ENCODE measurements at regions of chr6 and their contacts with region 1.

Region 1: DNA sequence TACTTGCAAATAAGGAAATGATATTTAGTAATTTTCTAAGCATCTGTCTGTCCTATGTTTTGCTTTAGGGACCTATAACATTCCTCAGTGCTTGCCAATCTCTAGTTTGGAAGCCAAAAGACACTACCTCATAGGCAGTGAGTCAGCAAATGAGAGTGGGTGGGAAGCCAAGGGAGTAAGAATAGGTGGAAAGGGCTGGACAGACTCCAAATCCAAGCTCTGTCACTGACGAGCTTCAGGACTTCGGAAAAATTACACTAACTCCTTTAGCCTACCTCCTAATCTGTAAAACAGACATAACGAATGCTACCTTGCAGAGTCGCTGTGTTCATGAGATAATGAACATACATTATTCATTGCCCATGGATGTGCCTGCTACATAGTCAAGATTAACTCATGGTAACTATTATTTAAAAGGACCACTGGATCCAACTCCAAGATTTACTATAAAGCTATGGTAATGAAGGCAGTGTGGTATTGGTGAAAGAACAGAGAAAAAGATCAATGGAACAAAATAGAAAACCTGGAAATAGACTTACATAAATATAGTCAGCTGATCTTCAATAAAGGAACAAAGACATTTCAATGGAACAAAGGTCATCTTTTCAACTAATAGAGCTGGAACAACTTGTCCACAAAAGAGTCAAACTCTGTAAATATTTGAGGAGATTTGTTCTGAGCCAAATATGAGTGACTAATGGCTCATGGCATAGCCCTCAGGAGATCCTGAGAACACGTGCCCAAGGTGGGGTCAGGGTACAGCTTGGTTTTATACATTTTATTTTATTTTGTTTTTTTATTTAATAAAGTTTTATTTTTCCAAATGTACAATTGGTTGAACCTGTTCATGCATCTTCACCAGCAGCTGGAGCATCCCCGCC is 64.1 kb downstream of the FAM50B start:
- DNase-seq: no peak
- H3K4me3 Mint-ChIP-seq: no peak overlapping the region
- H3K27ac Mint-ChIP-seq: no peak overlapping the region
- H3K4me1 Mint-ChIP-seq: peaks cover 28% of the 10 kb centered on the region
- H3K27me3 Mint-ChIP-seq: peaks cover 54% of the 10 kb centered on the region

Region 2: DNA sequence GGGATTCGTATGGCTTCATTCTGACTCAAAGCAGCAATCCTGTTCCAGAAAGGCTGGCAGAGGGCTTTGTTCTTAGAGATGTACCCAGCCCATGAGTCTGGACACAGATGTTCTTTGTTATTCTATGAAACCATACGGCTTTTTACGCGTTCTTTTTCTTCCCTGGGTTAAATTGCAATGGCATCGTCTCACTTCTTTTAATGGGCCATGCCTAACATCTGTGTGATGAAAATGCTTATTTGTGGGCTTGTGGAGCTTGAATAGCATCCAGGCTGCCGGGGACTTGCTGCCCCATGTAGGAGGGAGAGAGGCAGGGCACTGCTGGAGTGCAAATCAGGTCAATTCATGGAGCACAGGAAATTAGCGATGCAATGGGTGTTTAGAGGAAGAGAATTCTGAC is 44.8 kb before region 1 on chr6:
- intact Hi-C with region 1: loop called (anchors 10 kb)
- DNase-seq: no peak
- H3K4me3 Mint-ChIP-seq: no peak overlapping the region
- H3K27ac Mint-ChIP-seq: no peak overlapping the region
- H3K4me1 Mint-ChIP-seq: peaks cover 17% of the 10 kb centered on the region
- H3K27me3 Mint-ChIP-seq: peaks cover 11% of the 10 kb centered on the region

Region 3: DNA sequence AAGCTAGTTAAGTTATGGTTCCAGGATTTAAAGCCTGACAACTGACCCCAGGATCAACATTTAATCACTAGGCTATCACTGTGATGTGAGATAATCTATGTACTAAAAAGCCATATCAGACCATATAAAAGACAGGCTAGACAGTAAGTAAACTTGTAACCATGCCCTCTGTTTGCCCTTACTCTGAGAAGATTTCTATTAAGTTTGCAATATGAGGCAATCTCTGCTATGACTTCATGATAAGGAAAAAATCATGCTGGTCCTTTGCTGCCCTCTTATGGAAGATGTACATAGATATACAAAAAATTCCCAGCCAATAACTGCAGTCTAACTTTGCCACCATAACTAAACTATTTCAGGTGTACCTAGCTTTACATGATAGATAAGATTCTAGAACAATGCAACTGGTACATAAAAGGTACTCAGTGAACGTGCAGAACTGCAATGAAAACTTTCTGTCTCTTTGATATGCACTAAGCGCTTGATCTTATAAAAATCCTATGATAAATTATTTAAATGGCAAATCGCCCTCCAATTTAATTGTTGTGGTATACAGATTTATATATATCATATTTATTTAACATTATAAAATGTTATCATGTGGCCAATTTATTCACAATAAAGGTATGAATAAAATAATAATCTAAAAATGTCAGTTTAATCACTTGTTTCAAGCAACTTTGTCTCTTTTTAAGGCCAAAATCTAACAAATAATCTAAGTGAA is 95.2 kb after region 1 on chr6:
- intact Hi-C with region 1: loop called (anchors 10 kb)
- DNase-seq: peak; percentile 72
- H3K4me3 Mint-ChIP-seq: no peak overlapping the region
- H3K27ac Mint-ChIP-seq: no peak overlapping the region
- H3K4me1 Mint-ChIP-seq: peaks cover 40% of the 10 kb centered on the region
- H3K27me3 Mint-ChIP-seq: no peaks in the 10 kb centered on the region